ENCODE measurements at regions of chr16 and their contacts with region 1.

Region 1: GRCh38 chr16:2340564-2341455 is at the start of gene ABCA3:
- DNase-seq: peak; percentile 96
- ATAC-seq: peak; percentile 97
- total RNA-seq, gene ABCA3: 39.0 TPM

Region 2: GRCh38 chr16:2500918-2501750 is 160.3 kb after region 1 on chr16:
- intact Hi-C with region 1: loop called (anchors 5 kb)
- DNase-seq: peak; percentile 92
- ATAC-seq: peak; percentile 92